Heart right ventricle (tissue), 16 donors: ENCODE measurements at regions of chr16 and their contacts with region 1.

Region 1: GRCh38 chr16:47424846-47425245 is 36.0 kb downstream of the ITFG1 start:
- DNase-seq: no peak
- ATAC-seq: no peak
- H3K4me3 ChIP-seq: no peak overlapping the region
- H3K27ac ChIP-seq: no peak overlapping the region
- H3K4me1 ChIP-seq: no peaks in the 10 kb centered on the region
- H3K27me3 ChIP-seq: no peaks in the 10 kb centered on the region
- CTCF ChIP-seq: no peak

Region 2: DNA sequence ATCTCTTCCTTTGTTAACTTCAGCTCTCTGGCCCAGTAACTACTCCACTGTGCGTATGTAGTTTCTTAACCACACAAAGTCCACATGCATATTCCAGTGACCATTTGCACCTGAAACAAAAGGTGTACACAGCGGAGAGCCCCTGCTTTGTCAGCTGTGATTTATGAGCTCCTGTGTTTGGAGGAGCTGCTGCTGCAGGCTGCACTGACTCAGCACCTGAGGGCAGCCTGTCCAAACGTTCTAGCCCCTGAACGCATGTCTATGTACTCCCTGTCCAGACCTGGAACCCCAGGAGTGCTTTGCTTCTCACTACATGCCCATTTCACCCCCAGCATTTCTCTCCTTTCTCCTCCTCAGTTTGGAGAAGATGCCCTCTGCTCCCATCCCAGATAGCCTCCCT is 514.8 kb after region 1 on chr16:
- intact Hi-C with region 1: loop called in 1 of 10 experiments (anchors 5 kb)
- DNase-seq: no peak
- ATAC-seq: no peak
- H3K4me3 ChIP-seq: no peak overlapping the region
- H3K27ac ChIP-seq: no peak overlapping the region
- H3K4me1 ChIP-seq: no peaks in the 10 kb centered on the region
- H3K27me3 ChIP-seq: peaks cover 0 to 10% (median 0%) of the 10 kb centered on the region in 7 donors
- CTCF ChIP-seq: no peak